ENCODE measurements at regions of chr1 and their contacts with region 1.

Region 1: DNA sequence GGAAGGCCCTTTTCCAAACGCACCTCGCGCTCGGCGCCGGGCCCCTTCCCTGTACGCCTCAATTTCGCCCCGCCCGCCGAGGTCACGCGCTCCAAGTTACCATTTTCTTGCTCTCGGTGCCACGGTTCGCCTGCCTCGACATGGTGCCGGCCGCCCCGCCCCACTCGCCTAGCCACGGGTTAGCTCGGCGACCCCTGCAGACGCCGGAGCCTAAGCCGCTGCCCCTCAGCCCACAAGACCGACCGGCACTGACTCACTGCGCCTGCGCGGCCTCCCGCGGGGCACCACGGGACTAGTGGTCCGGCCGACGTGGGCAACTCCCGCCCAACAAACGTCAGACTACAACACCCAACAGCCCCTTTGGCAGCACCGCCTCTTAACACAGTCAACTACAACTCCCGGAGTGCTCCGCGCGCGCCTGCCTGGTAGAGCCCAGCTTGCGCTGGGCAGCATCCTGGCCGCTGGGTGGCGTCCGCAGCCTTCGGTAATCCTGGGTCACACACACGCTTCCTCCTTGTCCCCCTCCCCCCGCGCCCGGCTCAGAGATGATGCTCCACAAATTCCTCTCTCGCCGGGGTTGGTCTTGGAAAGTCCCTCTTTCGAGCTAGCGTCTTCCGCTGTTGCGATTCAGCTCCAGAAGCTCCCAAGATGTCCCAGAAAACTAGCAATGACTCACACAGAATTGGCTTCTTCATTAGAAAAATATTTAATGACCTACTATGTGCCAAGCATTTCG is at the start of gene TRAPPC3:
- DNase-seq: peak; percentile 99 to 100 (median 99)
- H3K4me3 ChIP-seq: peak within 1 kb of the TSS; percentile 70 to 98
- H3K4me3 Mint-ChIP-seq: peak within 1 kb of the TSS; percentile 95 to 100 (median 98)
- H3K27ac ChIP-seq: peak within 1 kb of the TSS; percentile 88
- H3K27ac Mint-ChIP-seq: peak within 1 kb of the TSS; percentile 94 to 100 (median 99)
- H3K4me1 ChIP-seq: peaks cover 68% of the 10 kb centered on the region
- H3K4me1 Mint-ChIP-seq: peaks cover 46 to 84% (median 63%) of the 10 kb centered on the region in 4 donors
- H3K27me3 ChIP-seq: no peaks in the 10 kb centered on the region
- H3K27me3 Mint-ChIP-seq: no peaks in the 10 kb centered on the region
- total RNA-seq, gene TRAPPC3: 51.8 to 56.4 TPM

Region 2: GRCh38 chr1:35930593-35931445 is 218.6 kb before region 1 on chr1 and contains the start of gene AGO3:
- CTCF ChIA-PET with region 1: no interaction called
- POLR2A ChIA-PET with region 1: interaction called, 3 read pairs
- intact Hi-C with region 1: loop called (anchors 2 kb)
- DNase-seq: peak; percentile 87 to 92 (median 89)
- H3K4me3 ChIP-seq: peak within 1 kb of the TSS; percentile 71 to 72
- H3K4me3 Mint-ChIP-seq: peak within 1 kb of the TSS; percentile 92 to 97 (median 94)
- H3K27ac ChIP-seq: peak within 1 kb of the TSS; percentile 92
- H3K27ac Mint-ChIP-seq: peak within 1 kb of the TSS; percentile 97 to 99 (median 98)
- H3K4me1 ChIP-seq: peaks cover 26% of the 10 kb centered on the region
- H3K4me1 Mint-ChIP-seq: peaks cover 22 to 37% (median 28%) of the 10 kb centered on the region in 4 donors
- H3K27me3 ChIP-seq: no peaks in the 10 kb centered on the region
- H3K27me3 Mint-ChIP-seq: no peaks in the 10 kb centered on the region
- total RNA-seq, gene AGO3: 45.6 to 47.3 TPM

Region 3: DNA sequence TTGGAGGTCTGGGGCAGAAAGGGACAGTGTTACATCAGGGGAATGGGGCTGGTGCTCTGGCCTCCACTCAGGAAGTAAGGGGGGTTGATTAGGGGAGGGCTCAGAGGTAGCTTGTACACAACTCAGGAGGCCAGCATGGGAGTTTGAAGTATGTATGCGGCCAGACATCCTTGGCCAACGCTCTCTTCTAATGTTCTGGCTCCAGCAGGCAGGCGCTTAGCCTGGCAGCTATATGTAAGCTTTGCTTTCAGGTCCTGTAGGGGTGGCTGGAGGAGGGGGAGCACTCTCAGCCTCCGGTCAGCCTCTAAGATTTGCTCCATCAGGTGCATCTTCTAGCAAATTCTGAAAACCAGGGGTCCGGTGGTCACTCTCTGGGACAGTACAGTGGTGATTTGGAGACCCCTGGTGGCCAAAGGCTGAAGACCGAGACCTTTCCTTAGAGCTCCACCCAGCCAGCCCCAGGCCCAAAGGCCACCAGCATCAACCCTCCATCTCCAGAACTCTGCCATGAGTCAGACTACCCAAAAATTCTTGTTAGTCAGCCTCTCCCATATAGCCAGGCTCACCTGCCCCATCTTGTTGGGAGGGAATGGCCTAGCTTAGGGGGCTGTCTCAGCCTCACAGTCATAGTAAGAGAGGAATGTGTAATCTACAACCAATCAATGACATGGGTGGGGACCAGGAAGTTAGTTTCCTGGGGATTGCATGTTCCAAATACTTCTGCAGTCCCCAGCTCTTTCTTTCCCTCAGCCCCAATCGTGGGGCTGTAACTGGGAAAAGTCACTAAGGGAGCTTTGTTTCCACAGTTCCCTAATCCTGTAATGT is 14.7 kb before region 1 on chr1:
- CTCF ChIA-PET with region 1: interaction called, 11 read pairs
- POLR2A ChIA-PET with region 1: no interaction called
- intact Hi-C with region 1: no loop called
- DNase-seq: no peak
- H3K4me3 ChIP-seq: no peak overlapping the region
- H3K4me3 Mint-ChIP-seq: no peak overlapping the region
- H3K27ac ChIP-seq: no peak overlapping the region
- H3K27ac Mint-ChIP-seq: peak overlapping the region in 6 of 7 donors; percentile 3 to 90 (median 64)
- H3K4me1 ChIP-seq: no peaks in the 10 kb centered on the region
- H3K4me1 Mint-ChIP-seq: peaks cover 0 to 6% (median 3%) of the 10 kb centered on the region in 4 donors
- H3K27me3 ChIP-seq: no peaks in the 10 kb centered on the region
- H3K27me3 Mint-ChIP-seq: no peaks in the 10 kb centered on the region

Region 4: GRCh38 chr1:36175137-36176095 is 26.0 kb after region 1 on chr1:
- CTCF ChIA-PET with region 1: interaction called, 20 read pairs
- POLR2A ChIA-PET with region 1: interaction called, 20 read pairs
- intact Hi-C with region 1: no loop called
- DNase-seq: no peak
- H3K4me3 ChIP-seq: no peak overlapping the region
- H3K4me3 Mint-ChIP-seq: no peak overlapping the region
- H3K27ac ChIP-seq: peak overlapping the region; percentile 30
- H3K27ac Mint-ChIP-seq: peak overlapping the region in 4 of 7 donors; percentile 22 to 81 (median 42)
- H3K4me1 ChIP-seq: no peaks in the 10 kb centered on the region
- H3K4me1 Mint-ChIP-seq: peaks cover 7 to 13% (median 8%) of the 10 kb centered on the region in 4 donors
- H3K27me3 ChIP-seq: no peaks in the 10 kb centered on the region
- H3K27me3 Mint-ChIP-seq: no peaks in the 10 kb centered on the region

Region 5: DNA sequence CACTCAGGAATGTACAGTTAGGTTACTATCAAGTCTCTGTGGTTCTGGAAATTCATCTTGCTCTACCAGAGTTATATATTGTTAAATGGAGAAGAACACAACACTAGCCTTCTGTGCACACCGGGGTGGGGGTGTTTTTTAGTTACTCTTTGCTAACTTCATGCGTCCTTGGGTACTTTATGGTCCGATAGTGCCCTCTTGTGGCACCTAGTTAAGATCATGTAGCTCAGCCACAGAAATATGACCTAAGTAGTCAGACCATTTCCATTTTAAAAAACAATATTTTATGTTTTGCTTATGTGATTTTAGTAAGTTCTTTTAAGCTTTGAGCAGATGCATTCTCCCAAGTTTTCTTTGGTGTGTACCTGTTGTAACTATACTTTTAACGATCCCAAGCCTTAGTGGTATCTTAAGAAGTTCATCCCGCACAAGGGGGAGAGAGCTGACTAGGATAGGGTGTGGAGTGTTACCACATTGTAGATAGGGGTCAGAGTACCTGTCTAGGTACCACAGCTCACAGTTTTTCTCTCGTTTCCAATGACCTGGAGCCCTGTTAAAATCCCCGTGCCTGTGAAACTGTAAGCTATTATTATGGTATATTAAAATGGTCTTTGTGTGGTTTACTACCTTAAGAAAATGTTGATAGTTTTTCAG is 136.2 kb after region 1 on chr1:
- CTCF ChIA-PET with region 1: interaction called, 57 read pairs
- POLR2A ChIA-PET with region 1: interaction called, 15 read pairs
- intact Hi-C with region 1: loop called (anchors 1 kb)
- DNase-seq: peak; percentile 72 to 81 (median 75)
- H3K4me3 ChIP-seq: no peak overlapping the region
- H3K4me3 Mint-ChIP-seq: peak overlapping the region in 5 of 8 donors; percentile 5 to 41 (median 13)
- H3K27ac ChIP-seq: no peak overlapping the region
- H3K27ac Mint-ChIP-seq: peak overlapping the region; percentile 24 to 89 (median 76)
- H3K4me1 ChIP-seq: peaks cover 13% of the 10 kb centered on the region
- H3K4me1 Mint-ChIP-seq: peaks cover 8 to 29% (median 15%) of the 10 kb centered on the region in 4 donors
- H3K27me3 ChIP-seq: no peaks in the 10 kb centered on the region
- H3K27me3 Mint-ChIP-seq: no peaks in the 10 kb centered on the region

Region 6: GRCh38 chr1:36385410-36386257 is 236.2 kb after region 1 on chr1 and contains the start of gene STK40:
- CTCF ChIA-PET with region 1: interaction called, 4 read pairs
- POLR2A ChIA-PET with region 1: interaction called, 5 read pairs
- intact Hi-C with region 1: loop called (anchors 1 kb)
- DNase-seq: peak; percentile 95 to 99 (median 98)
- H3K4me3 ChIP-seq: peak within 1 kb of the TSS; percentile 88 to 94
- H3K4me3 Mint-ChIP-seq: peak within 1 kb of the TSS; percentile 91 to 96 (median 94)
- H3K27ac ChIP-seq: peak within 1 kb of the TSS; percentile 87
- H3K27ac Mint-ChIP-seq: peak within 1 kb of the TSS; percentile 97 to 100 (median 99)
- H3K4me1 ChIP-seq: peaks cover 57% of the 10 kb centered on the region
- H3K4me1 Mint-ChIP-seq: peaks cover 35 to 62% (median 47%) of the 10 kb centered on the region in 4 donors
- H3K27me3 ChIP-seq: no peaks in the 10 kb centered on the region
- H3K27me3 Mint-ChIP-seq: no peaks in the 10 kb centered on the region
- total RNA-seq, gene STK40: 52.2 to 57.4 TPM

Region 7: DNA sequence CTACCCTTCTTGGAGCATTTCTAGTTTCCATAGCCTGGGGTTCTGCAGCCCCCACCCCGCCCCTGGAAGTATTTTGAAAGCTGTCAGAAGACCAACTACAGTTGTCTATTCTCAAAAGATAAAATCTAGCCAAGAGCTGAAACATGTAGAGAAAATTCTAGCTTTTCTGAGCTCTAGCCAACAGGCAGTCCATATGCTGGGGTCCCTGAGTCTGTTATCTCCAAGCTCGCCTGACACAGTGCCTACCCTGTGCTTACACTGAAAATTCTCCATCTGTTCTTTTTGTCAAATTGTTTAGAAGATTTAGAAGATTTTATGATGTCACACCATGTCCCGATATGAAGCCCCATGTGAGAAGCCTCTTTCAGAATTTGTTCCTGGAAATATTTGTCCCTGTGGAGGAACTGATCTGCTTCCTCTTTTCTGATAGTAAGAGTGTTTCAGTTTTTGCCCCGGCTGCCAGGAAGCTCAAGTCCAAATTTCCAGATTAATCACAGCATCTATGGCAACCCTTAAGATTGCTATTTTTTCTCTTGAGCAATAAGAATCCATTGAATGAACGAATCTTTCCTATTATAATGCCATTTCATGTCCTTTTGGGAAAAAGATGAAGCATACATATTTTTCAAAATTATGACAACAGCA is 357.0 kb after region 1 on chr1:
- CTCF ChIA-PET with region 1: no interaction called
- POLR2A ChIA-PET with region 1: no interaction called
- intact Hi-C with region 1: no loop called
- DNase-seq: no peak
- H3K4me3 ChIP-seq: no peak overlapping the region
- H3K4me3 Mint-ChIP-seq: no peak overlapping the region
- H3K27ac ChIP-seq: no peak overlapping the region
- H3K27ac Mint-ChIP-seq: no peak overlapping the region
- H3K4me1 ChIP-seq: no peaks in the 10 kb centered on the region
- H3K4me1 Mint-ChIP-seq: no peaks in the 10 kb centered on the region
- H3K27me3 ChIP-seq: no peaks in the 10 kb centered on the region
- H3K27me3 Mint-ChIP-seq: peaks cover 17 to 33% of the 10 kb centered on the region in 2 donors

Region 8: DNA sequence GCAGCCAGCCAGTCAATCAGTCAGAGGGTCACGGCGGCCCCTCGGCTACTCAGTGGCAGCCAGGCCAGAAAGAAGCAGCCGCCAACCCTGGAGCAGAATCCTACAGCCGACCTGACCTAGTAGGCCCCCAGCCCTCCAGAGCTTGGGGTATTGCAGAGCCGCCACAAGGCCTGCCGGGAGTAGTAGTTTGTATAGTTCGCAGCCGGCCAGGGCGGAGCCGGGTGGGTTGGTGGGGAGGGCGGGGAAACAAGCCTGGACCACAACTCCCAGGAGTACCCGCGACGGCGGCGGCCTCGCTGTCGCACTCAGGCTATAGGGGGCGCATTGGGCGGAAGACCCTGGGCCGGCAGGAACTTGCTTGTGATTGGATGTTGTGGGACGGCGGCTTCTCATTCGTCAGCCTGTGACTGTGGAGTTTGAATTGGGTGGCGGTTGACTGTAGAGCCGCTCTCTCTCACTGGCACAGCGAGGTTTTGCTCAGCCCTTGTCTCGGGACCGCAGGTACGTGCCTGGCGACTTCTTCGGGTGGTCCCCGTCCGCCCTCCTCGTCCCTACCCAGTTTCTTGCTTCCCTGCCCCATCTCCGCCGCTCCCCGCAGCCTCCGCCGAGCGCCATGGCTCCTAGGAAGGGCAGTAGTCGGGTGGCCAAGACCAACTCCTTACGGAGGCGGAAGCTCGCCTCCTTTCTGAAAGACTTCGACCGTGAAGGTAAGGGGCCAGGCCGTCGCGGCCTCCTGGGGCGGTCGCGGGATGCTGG is 1542.9 kb after region 1 on chr1 and contains the start of gene CDCA8:
- CTCF ChIA-PET with region 1: no interaction called
- POLR2A ChIA-PET with region 1: no interaction called
- intact Hi-C with region 1: loop called (anchors 10 kb)
- DNase-seq: peak; percentile 98
- H3K4me3 ChIP-seq: peak within 1 kb of the TSS; percentile 85 to 86
- H3K4me3 Mint-ChIP-seq: peak within 1 kb of the TSS; percentile 92 to 97 (median 96)
- H3K27ac ChIP-seq: peak within 1 kb of the TSS; percentile 67
- H3K27ac Mint-ChIP-seq: peak within 1 kb of the TSS; percentile 87 to 97 (median 95)
- H3K4me1 ChIP-seq: peaks cover 32% of the 10 kb centered on the region
- H3K4me1 Mint-ChIP-seq: peaks cover 21 to 45% (median 35%) of the 10 kb centered on the region in 4 donors
- H3K27me3 ChIP-seq: no peaks in the 10 kb centered on the region
- H3K27me3 Mint-ChIP-seq: no peaks in the 10 kb centered on the region
- total RNA-seq, gene CDCA8: 0.61 to 1.3 TPM